Transverse colon (tissue), 4 donors: ENCODE measurements at regions of chr1 and their contacts with region 1.

Region 1: DNA sequence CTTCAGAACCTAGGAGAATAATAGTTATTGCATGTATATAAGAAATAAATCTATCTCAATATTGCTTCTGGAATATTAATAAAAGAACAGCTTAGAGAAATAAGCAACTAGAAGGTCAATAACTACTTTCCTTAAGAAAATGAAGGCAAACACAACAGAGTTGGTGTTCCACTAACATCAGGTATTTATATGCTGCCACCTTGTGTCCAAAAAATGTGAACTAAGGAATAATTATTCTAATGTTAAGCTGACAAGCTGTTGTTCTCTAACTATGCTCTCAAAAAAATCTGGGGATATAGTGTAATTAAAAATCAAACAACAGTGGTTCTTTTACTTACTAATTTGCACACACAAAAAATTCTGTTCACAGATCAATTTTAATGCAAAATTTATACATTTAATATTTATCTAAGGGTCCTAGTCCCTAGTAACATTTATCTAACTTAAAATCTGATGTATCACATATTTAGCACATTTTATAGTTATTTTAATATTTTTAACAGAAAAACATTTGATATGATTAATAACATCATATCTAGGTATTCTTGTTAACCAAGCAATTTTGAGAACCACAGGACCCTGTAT is 39.6 kb downstream of the UCHL5 start:
- DNase-seq: no peak
- H3K4me3 ChIP-seq: no peak overlapping the region
- H3K27ac ChIP-seq: peak overlapping the region in 2 of 4 donors; percentile 7 to 27
- H3K4me1 ChIP-seq: peaks cover 0 to 11% (median 0%) of the 10 kb centered on the region in 4 donors
- H3K27me3 ChIP-seq: no peaks in the 10 kb centered on the region
- CTCF ChIP-seq: peak; percentile 44 to 70 (median 56)
- EP300 ChIP-seq: no peak
- POLR2A ChIP-seq: no peak

Region 2: GRCh38 chr1:192793983-192794767 is 225.4 kb before region 1 on chr1:
- in situ Hi-C with region 1: loop called in 1 of 4 experiments (anchors 10 kb)
- intact Hi-C with region 1: no loop called
- DNase-seq: no peak
- H3K4me3 ChIP-seq: no peak overlapping the region
- H3K27ac ChIP-seq: peak overlapping the region in 2 of 4 donors; percentile 23 to 59
- H3K4me1 ChIP-seq: no peaks in the 10 kb centered on the region
- H3K27me3 ChIP-seq: no peaks in the 10 kb centered on the region
- CTCF ChIP-seq: no peak
- EP300 ChIP-seq: no peak
- POLR2A ChIP-seq: no peak

Region 3: DNA sequence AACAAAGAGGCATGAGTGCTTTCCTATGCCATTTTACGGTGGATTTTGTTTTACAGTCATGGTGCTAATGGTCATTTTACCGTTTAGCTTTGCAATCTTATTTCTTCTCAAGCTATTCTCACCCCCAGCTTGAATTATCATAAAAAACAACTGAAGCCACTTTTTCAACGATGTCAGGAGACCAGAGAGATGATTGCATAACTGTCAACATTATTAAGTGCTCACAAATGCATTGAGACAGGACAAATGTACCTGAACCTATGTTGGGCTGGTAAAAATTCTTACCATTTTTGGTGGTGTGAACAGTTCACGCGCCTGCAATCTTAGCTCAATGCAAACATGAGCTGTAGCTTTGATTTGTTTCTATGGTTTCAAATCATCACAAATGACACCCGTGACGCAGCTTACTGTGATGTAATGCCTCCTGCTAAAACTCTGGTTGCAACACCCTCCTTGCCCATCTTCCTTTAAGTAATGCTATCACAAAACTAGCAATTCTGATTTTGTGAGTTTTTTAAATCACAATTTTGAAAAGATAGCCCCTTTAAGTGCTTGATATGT is 64.7 kb before region 1 on chr1:
- in situ Hi-C with region 1: no loop called
- intact Hi-C with region 1: no loop called
- DNase-seq: no peak
- H3K4me3 ChIP-seq: no peak overlapping the region
- H3K27ac ChIP-seq: no peak overlapping the region
- H3K4me1 ChIP-seq: peaks cover 0 to 13% (median 2%) of the 10 kb centered on the region in 4 donors
- H3K27me3 ChIP-seq: no peaks in the 10 kb centered on the region
- CTCF ChIP-seq: no peak
- EP300 ChIP-seq: no peak
- POLR2A ChIP-seq: no peak